ENCODE measurements at regions of chr11 and their contacts with region 1.

Region 1: GRCh38 chr11:104968355-104968855 is at the start of gene CASP4:
- DNase-seq: peak; percentile 84
- H3K4me3 Mint-ChIP-seq: peak within 1 kb of the TSS; percentile 85
- H3K27ac Mint-ChIP-seq: peak within 1 kb of the TSS; percentile 99
- H3K4me1 Mint-ChIP-seq: peaks cover 21% of the 10 kb centered on the region
- H3K27me3 Mint-ChIP-seq: no peaks in the 10 kb centered on the region
- CTCF ChIP-seq: no peak
- total RNA-seq, gene CASP4: 93.6 and 98.8 TPM in 2 replicates

Region 2: GRCh38 chr11:103284260-103284659 is 1684.1 kb before region 1 on chr11:
- CTCF ChIA-PET with region 1: no interaction called
- POLR2A ChIA-PET with region 1: no interaction called
- intact Hi-C with region 1: no loop called
- DNase-seq: no peak
- H3K4me3 Mint-ChIP-seq: no peak overlapping the region
- H3K27ac Mint-ChIP-seq: no peak overlapping the region
- H3K4me1 Mint-ChIP-seq: peaks cover 10% of the 10 kb centered on the region
- H3K27me3 Mint-ChIP-seq: no peaks in the 10 kb centered on the region
- CTCF ChIP-seq: no peak

Region 3: GRCh38 chr11:104956528-104956927 is 11.9 kb before region 1 on chr11:
- CTCF ChIA-PET with region 1: interaction called, 6 read pairs
- POLR2A ChIA-PET with region 1: interaction called, 33 read pairs
- intact Hi-C with region 1: no loop called
- DNase-seq: peak; percentile 74
- H3K4me3 Mint-ChIP-seq: peak overlapping the region; percentile 45
- H3K27ac Mint-ChIP-seq: peak overlapping the region; percentile 83
- H3K4me1 Mint-ChIP-seq: peaks cover 36% of the 10 kb centered on the region
- H3K27me3 Mint-ChIP-seq: no peaks in the 10 kb centered on the region
- CTCF ChIP-seq: no peak

Region 4: DNA sequence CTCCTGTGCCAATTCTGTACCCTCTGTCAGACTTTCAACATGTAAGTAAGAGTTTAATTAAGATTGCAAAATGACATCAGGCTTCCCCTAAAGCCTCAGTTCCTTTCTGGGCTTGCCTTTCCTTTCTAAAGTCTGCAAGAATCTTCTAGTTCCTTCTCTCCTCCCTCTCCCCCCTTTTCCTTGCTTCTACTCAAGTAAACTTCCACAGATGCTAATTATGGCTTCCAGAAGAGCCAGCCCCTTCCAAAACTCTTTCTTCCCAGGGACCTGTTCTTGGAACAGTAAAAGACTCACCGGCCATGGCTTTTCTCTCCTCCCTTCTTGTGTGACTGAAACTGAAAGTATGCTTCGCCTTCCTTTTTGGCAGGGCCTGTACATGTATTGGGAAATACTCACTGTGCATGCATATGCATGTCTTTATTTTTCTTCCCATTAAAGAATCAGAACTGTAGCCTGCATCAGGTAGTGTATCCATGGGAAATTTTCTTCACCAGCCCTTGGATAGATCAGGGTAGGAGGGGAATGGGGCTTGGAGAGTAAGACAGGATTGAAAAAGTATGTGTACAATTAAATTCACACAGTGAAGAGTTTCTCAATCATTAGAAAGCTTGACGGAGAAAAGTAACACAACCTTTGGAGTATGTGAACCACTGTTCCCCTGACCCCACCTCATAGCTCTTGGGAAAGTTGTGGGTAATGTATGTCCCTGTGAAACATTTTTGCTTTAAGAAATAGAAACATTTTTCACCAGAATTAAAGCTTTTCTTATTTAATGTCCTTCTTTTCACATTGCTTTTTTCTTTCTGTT is 66.6 kb after region 1 on chr11 and contains the start of gene CASP1:
- CTCF ChIA-PET with region 1: no interaction called
- POLR2A ChIA-PET with region 1: interaction called, 12 read pairs
- intact Hi-C with region 1: no loop called
- DNase-seq: peak; percentile 91
- H3K4me3 Mint-ChIP-seq: peak within 1 kb of the TSS; percentile 90
- H3K27ac Mint-ChIP-seq: peak within 1 kb of the TSS; percentile 90
- H3K4me1 Mint-ChIP-seq: peaks cover 31% of the 10 kb centered on the region
- H3K27me3 Mint-ChIP-seq: no peaks in the 10 kb centered on the region
- CTCF ChIP-seq: no peak
- total RNA-seq, gene CASP1: 27.2 and 34.4 TPM in 2 replicates

Region 5: DNA sequence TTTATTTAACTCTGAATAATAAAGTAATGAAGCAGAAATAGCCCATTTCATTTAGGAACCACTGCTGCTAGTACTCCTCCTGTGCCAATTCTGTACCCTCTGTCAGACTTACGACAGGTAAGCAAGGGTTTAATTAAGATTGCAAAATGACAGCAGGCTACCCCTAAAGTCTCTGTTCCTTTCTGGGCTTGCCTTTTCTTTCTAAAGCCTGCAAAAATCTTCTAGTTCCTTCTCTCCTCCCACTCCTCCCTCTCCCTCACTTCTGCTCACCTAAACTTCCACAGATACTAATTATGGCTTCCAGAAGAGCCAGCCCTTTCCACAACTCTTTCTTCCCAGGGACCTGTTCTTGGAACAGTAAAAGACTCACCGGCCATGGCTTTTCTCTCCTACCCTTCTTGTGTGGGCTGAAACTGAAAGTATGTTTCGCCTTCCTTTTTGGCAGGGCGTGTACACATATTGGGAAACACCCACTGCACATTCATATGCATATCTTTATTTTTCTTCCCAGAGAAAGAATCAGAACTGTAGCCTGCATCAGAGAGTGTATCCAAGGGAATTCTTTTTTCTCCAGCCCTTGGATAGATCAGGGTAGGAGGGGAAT is 76.6 kb after region 1 on chr11 and contains the start of gene CARD16:
- CTCF ChIA-PET with region 1: interaction called, 7 read pairs
- POLR2A ChIA-PET with region 1: interaction called, 14 read pairs
- intact Hi-C with region 1: loop called (anchors 2 kb)
- DNase-seq: peak; percentile 83
- H3K4me3 Mint-ChIP-seq: peak within 1 kb of the TSS; percentile 78
- H3K27ac Mint-ChIP-seq: peak within 1 kb of the TSS; percentile 93
- H3K4me1 Mint-ChIP-seq: peaks cover 64% of the 10 kb centered on the region
- H3K27me3 Mint-ChIP-seq: no peaks in the 10 kb centered on the region
- CTCF ChIP-seq: no peak
- total RNA-seq, gene CARD16: 14.0 and 14.4 TPM in 2 replicates